ENCODE measurements at regions of chr3 and their contacts with region 1.

Region 1: DNA sequence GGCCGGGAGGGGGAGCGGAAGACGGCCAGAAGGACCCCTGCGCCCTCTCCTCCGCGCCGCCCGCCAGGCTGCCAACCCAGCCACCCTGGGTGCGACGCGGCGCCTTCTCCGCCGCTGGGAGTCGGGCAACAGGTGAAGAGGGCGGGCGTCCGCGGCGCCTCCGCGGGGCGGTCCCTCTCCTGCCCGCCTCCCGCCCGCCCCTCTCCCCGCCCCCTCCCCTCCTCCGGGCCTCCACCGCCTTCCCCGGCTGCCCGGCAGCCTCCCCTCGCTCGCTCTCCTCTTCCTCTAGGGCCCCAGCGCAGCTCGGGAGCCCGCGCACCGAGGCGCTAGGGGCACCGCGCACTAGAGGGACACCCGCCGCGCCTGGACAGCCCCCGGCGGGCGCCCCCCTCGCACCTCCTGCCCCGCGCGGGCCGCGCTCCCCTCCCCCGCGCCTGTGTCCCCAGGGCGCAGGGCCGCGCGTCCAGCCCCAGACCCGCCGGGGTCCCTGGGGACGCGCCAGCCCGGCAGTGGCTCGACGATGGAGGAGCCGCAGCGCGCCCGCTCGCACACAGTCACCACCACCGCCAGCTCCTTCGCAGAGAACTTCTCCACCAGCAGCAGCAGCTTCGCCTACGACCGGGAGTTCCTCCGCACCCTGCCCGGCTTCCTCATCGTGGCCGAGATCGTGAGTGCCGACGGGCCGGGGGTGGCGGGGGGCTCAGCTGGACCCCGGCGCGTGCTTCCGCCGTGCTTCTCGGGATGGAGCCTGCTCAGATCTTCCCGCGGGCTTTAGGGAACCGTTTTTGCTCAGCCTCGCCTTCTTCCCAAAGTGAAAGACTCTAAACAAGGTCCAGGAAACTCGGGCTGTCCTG is at the start of gene CMTM8:
- DNase-seq: peak; percentile 74 to 83
- H3K4me3 ChIP-seq: peak within 1 kb of the TSS; percentile 87
- H3K4me3 Mint-ChIP-seq: peak within 1 kb of the TSS; percentile 97
- H3K27ac Mint-ChIP-seq: peak within 1 kb of the TSS; percentile 88
- H3K4me1 ChIP-seq: peaks cover 14% of the 10 kb centered on the region
- H3K4me1 Mint-ChIP-seq: peaks cover 20% of the 10 kb centered on the region
- H3K27me3 ChIP-seq: no peaks in the 10 kb centered on the region
- H3K27me3 Mint-ChIP-seq: no peaks in the 10 kb centered on the region
- CTCF ChIP-seq: no peak
- total RNA-seq, gene CMTM8: 28.2 and 28.5 TPM in 2 replicates

Region 2: DNA sequence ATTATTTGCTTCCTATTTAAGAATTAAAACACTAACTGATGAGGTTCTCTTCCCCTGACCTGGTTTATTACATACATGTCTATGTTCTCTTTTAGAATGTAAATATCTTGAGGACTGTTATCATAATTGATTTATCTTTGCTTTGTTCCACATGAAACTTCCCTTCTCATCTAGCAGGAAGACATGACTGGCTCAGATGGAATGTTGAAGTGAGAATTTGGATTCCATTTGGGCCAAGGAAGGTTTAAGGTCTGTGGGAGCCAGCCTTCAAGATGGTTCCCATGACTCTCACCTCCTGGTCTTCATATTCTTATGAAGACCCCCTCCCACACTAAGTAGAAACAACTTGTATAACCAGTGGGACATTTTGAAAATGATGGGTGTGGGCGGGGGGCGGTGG is 1122.0 kb before region 1 on chr3:
- CTCF ChIA-PET with region 1: no interaction called
- POLR2A ChIA-PET with region 1: no interaction called
- intact Hi-C with region 1: no loop called
- DNase-seq: no peak
- H3K4me3 ChIP-seq: no peak overlapping the region
- H3K4me3 Mint-ChIP-seq: no peak overlapping the region
- H3K27ac Mint-ChIP-seq: no peak overlapping the region
- H3K4me1 ChIP-seq: no peaks in the 10 kb centered on the region
- H3K4me1 Mint-ChIP-seq: no peaks in the 10 kb centered on the region
- H3K27me3 ChIP-seq: no peaks in the 10 kb centered on the region
- H3K27me3 Mint-ChIP-seq: no peaks in the 10 kb centered on the region
- CTCF ChIP-seq: no peak

Region 3: GRCh38 chr3:32216172-32216783 is 22.4 kb before region 1 on chr3:
- CTCF ChIA-PET with region 1: no interaction called
- POLR2A ChIA-PET with region 1: no interaction called
- intact Hi-C with region 1: loop called (anchors 1 kb)
- DNase-seq: peak; percentile 90
- H3K4me3 ChIP-seq: no peak overlapping the region
- H3K4me3 Mint-ChIP-seq: peak overlapping the region; percentile 71
- H3K27ac Mint-ChIP-seq: peak overlapping the region; percentile 91
- H3K4me1 ChIP-seq: peaks cover 28% of the 10 kb centered on the region
- H3K4me1 Mint-ChIP-seq: peaks cover 7% of the 10 kb centered on the region
- H3K27me3 ChIP-seq: no peaks in the 10 kb centered on the region
- H3K27me3 Mint-ChIP-seq: no peaks in the 10 kb centered on the region
- CTCF ChIP-seq: no peak

Region 4: GRCh38 chr3:32283304-32283703 is 44.6 kb after region 1 on chr3:
- CTCF ChIA-PET with region 1: no interaction called
- POLR2A ChIA-PET with region 1: no interaction called
- intact Hi-C with region 1: loop called (anchors 5 kb)
- DNase-seq: no peak
- H3K4me3 ChIP-seq: no peak overlapping the region
- H3K4me3 Mint-ChIP-seq: no peak overlapping the region
- H3K27ac Mint-ChIP-seq: no peak overlapping the region
- H3K4me1 ChIP-seq: peaks cover 44% of the 10 kb centered on the region
- H3K4me1 Mint-ChIP-seq: peaks cover 23% of the 10 kb centered on the region
- H3K27me3 ChIP-seq: no peaks in the 10 kb centered on the region
- H3K27me3 Mint-ChIP-seq: no peaks in the 10 kb centered on the region
- CTCF ChIP-seq: no peak

Region 5: GRCh38 chr3:32340039-32340438 is 101.4 kb after region 1 on chr3:
- CTCF ChIA-PET with region 1: interaction called, 3 read pairs
- POLR2A ChIA-PET with region 1: no interaction called
- intact Hi-C with region 1: loop called (anchors 1 kb)
- DNase-seq: peak; percentile 67 to 68
- H3K4me3 ChIP-seq: no peak overlapping the region
- H3K4me3 Mint-ChIP-seq: no peak overlapping the region
- H3K27ac Mint-ChIP-seq: no peak overlapping the region
- H3K4me1 ChIP-seq: peaks cover 9% of the 10 kb centered on the region
- H3K4me1 Mint-ChIP-seq: peaks cover 6% of the 10 kb centered on the region
- H3K27me3 ChIP-seq: no peaks in the 10 kb centered on the region
- H3K27me3 Mint-ChIP-seq: no peaks in the 10 kb centered on the region
- CTCF ChIP-seq: peak; percentile 49 to 71

Measured in Caco-2 (cell line).